Dendritic cell treated with granulocyte-macrophage colony-stimulating factor and Interleukin-4, amounts not matched to agents 40 ng/mL and 50 ng/mL, for 4 days (primary cell): ENCODE measurements at regions of chr6 and their contacts with region 1.

Region 1: DNA sequence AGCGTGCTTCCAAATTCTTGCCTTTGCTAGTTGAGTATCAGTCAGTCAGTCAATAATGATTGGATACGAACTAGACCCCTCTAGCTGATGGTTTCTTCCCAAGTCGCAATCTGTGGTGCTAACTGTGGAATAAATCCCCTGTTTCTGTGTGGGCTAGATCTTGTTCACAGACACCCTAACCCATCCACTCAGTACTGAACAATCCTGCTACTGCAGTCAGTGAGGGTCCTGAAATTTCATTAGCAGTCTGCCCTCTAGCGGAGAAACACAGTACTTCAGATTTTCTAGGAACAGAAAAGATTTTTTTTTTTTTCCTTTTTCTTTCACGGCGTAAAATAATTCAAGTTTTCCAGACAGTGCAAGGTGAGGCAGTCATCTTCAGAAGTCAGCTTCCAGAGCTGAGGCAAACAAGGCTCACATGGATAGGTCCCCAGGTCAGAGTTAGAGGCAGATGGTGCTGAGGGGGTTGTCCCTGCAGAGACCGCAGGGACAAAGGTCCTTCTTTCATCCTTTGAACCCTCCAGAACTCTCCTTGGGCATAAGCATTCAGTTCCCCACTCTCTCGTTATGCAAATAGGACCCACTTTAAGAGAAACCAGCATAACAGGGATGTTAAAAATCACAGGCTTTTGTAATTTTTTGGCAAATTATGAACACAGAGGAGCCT is 119.6 kb downstream of the SCML4 start:
- H3K4me3 Mint-ChIP-seq: no peak overlapping the region
- H3K27ac Mint-ChIP-seq: no peak overlapping the region
- H3K4me1 Mint-ChIP-seq: peaks cover 8% of the 10 kb centered on the region
- H3K27me3 Mint-ChIP-seq: peaks cover 11% of the 10 kb centered on the region

Region 2: GRCh38 chr6:107318100-107318736 is 386.3 kb before region 1 on chr6:
- intact Hi-C with region 1: loop called (anchors 5 kb)
- H3K4me3 Mint-ChIP-seq: no peak overlapping the region
- H3K27ac Mint-ChIP-seq: no peak overlapping the region
- H3K4me1 Mint-ChIP-seq: peaks cover 12% of the 10 kb centered on the region
- H3K27me3 Mint-ChIP-seq: no peaks in the 10 kb centered on the region